HCT116 (cell line): ENCODE measurements at regions of chr19 and their contacts with region 1.

Region 1: DNA sequence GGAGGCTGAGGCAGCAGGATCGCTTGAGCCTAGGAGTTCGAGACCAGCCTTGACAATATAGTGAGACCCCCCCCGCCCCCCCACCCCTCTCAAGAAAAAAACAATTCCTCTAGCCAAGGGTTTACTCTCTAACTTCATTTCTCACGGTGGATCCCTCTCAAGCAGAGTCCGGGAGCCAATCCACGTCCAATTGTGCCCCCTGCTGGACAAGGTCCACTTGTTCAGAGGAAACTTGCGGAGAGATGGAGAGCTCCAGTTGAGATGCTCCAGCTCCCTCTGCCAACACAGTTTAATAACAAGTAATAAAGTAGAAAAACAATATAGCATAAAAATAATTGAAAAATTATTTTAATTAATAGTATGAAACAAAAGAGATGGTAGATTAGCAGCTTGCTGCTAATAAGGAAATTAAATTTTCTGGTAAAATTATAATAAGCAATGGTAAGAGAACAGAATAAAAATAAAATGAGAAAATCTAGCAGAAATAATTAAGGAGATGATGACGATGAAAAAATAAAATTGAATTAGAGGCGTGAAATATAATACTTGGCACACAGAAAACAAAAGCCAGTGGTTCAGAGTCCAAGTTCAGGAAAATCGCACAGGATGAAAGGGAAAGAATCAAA is 14.5 kb upstream of the SIGLEC14 start:
- DNase-seq: peak; percentile 55
- ATAC-seq: peak; percentile 86
- H3K4me3 ChIP-seq: no peak overlapping the region
- H3K27ac ChIP-seq: no peak overlapping the region
- H3K4me1 ChIP-seq: peaks cover 0 to 5% of the 10 kb centered on the region in 2 experiments; a peak in 2 of 4 replicates
- H3K27me3 ChIP-seq: peaks cover 12% of the 10 kb centered on the region; the same call in 1 of the 2 replicates
- CTCF ChIP-seq: peak; percentile 59 to 77 (median 66)
- POLR2A ChIP-seq: no peak
- RAD21 ChIP-seq: peak; percentile 72

Region 2: DNA sequence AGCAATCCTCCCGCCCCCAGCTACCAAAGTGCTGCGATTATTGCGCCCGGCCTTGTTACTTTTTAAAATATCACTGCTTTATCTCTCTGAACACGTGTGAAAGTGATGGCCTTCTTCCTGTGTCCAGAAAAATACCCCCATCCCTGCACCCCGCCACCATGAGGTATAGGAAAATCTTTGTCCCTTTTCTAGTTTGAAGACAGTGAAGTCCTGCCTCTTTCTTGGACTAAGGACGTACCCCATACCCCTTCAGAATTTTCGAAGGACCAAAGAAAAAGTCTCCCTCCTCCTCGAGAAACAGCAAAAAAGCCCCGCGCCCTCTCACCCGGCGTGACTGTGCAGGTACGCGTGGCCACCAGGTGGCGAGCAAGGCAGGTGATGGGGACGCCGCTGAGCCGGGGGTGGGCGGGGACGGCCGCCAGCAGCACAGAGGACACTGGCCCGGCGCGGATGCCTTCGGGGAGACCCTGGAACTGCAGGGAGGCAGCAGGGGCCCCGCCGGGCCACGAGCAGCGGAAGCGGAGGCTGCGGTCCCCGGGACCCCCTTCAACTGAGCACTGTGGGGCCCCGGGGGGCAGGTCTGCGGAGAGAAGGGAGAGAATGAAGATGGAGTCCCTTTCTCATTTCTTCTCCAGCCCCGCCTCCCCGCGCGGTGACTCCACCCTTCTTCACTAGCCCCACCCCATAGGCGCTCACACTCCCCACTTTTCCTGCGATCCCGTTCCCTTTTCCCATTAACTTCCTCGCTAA is 322.4 kb before region 1 on chr19:
- CTCF ChIA-PET with region 1: interaction called, 10 read pairs
- POLR2A ChIA-PET with region 1: no interaction called
- RAD21 ChIA-PET with region 1: no interaction called
- intact Hi-C with region 1: loop called (anchors 1 kb)
- DNase-seq: peak; percentile 56
- ATAC-seq: peak; percentile 76
- H3K4me3 ChIP-seq: peak overlapping the region; percentile 54 to 67
- H3K27ac ChIP-seq: peak overlapping the region; percentile 55
- H3K4me1 ChIP-seq: peaks cover 5 to 45% of the 10 kb centered on the region in 2 experiments; a peak in 3 of 4 replicates
- H3K27me3 ChIP-seq: no peaks in the 10 kb centered on the region
- CTCF ChIP-seq: peak; percentile 86 to 92 (median 89)
- POLR2A ChIP-seq: no peak
- RAD21 ChIP-seq: peak; percentile 86

Region 3: DNA sequence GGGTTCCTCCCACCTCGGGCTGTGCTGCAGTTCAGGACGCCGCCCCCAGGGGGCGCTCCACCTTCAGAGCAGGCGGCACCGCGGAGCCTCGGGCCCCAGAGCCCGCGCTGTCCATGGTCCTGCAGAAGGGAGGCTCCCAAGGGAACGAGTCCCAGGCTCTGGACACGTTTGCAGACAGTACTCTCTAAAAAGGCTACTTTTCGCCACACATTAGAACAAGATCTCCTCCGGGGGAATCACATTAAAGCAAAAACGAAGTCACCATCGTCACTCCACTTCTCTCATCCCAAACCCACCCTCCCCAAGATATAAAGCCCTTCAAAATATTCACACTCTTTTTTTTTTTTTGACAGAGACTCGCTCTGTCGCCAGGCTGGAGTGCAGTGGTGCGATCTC is 239.0 kb before region 1 on chr19:
- CTCF ChIA-PET with region 1: interaction called, 22 read pairs
- POLR2A ChIA-PET with region 1: no interaction called
- RAD21 ChIA-PET with region 1: interaction called in 1 of 2 experiments, 3 read pairs
- intact Hi-C with region 1: loop called (anchors 5 kb)
- DNase-seq: peak; percentile 56
- ATAC-seq: peak; percentile 96
- H3K4me3 ChIP-seq: no peak overlapping the region
- H3K27ac ChIP-seq: no peak overlapping the region
- H3K4me1 ChIP-seq: no peaks in the 10 kb centered on the region; a peak in 1 of 4 replicates
- H3K27me3 ChIP-seq: peaks cover 16% of the 10 kb centered on the region; the same call in 1 of the 2 replicates
- CTCF ChIP-seq: peak; percentile 82 to 100 (median 97)
- POLR2A ChIP-seq: no peak
- RAD21 ChIP-seq: peak; percentile 81

Region 4: GRCh38 chr19:51473009-51473707 is 187.9 kb before region 1 on chr19:
- CTCF ChIA-PET with region 1: interaction called, 35 read pairs
- POLR2A ChIA-PET with region 1: no interaction called
- RAD21 ChIA-PET with region 1: interaction called in 1 of 2 experiments, 4 read pairs
- intact Hi-C with region 1: loop called (anchors 1 kb)
- DNase-seq: peak; percentile 59
- ATAC-seq: peak; percentile 95
- H3K4me3 ChIP-seq: no peak overlapping the region
- H3K27ac ChIP-seq: no peak overlapping the region
- H3K4me1 ChIP-seq: peaks cover 4 to 13% of the 10 kb centered on the region in 2 experiments; a peak in 2 of 4 replicates
- H3K27me3 ChIP-seq: peaks cover 5% of the 10 kb centered on the region; the same call in 1 of the 2 replicates
- CTCF ChIP-seq: peak; percentile 79 to 85 (median 82)
- POLR2A ChIP-seq: no peak
- RAD21 ChIP-seq: peak; percentile 71

Region 5: DNA sequence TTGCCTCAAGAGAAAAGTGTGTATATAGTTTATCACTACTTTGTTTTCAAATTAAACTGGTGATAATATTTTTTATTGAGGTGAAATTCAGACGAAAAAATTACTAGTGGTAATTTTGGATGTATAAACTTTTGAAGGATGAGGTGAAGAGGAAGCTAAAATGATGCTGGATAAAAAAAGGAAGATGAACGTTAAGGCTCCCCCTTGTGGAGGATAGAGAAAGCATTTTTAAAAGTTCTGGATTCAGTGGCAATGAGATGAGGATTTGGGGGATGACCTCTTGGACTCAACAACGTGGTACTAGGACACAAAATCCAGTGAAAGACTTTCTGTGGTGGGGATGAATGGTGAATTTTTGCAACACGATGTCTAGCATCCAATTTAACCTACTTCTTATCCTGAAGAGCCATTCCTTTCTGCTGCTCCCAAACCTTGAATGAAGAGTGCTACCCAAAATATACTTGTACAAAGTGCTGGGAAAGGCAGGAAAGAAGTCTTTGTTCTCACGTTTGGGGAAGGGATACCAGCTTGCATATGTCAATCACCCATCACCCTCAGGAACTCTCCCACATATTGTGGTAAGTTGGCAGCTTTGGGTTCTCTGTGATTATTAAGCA is 23.6 kb before region 1 on chr19:
- CTCF ChIA-PET with region 1: interaction called, 21 read pairs
- POLR2A ChIA-PET with region 1: no interaction called
- RAD21 ChIA-PET with region 1: no interaction called
- intact Hi-C with region 1: no loop called
- DNase-seq: no peak
- ATAC-seq: no peak
- H3K4me3 ChIP-seq: no peak overlapping the region
- H3K27ac ChIP-seq: no peak overlapping the region
- H3K4me1 ChIP-seq: no peaks in the 10 kb centered on the region
- H3K27me3 ChIP-seq: peaks cover 39% of the 10 kb centered on the region
- CTCF ChIP-seq: peak; percentile 32 to 70 (median 58); a peak in 5 of 6 replicates
- POLR2A ChIP-seq: no peak
- RAD21 ChIP-seq: peak; percentile 44

Region 6: DNA sequence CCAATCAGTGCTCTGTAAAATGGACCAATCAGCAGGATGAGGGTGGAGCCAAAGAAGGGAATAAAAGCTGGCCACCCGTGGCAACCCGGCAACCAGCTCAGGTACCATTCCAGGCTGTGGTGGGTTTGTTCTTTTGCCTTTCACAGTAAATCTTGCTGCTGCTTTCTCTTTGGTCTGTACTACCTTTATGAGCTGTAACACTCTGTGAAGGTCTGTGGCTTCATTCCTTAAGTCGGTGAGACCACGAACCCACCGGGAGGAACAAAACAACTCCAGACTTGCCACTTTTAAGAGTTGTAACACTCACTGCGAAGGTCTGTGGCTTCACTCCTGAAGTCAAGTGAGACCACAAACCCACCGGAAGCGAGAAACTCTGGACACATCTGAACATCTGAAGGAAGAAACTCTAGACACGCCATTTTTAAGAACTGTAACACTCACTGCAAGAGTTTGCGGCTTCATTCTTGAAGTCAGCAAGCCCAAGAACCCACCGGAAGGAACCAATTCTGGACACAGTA is 15.5 kb after region 1 on chr19:
- CTCF ChIA-PET with region 1: interaction called, 10 read pairs
- POLR2A ChIA-PET with region 1: no interaction called
- RAD21 ChIA-PET with region 1: no interaction called
- intact Hi-C with region 1: no loop called
- DNase-seq: no peak
- ATAC-seq: peak; percentile 42; the same call in 1 of the 2 replicates
- H3K4me3 ChIP-seq: no peak overlapping the region
- H3K27ac ChIP-seq: no peak overlapping the region
- H3K4me1 ChIP-seq: no peaks in the 10 kb centered on the region
- H3K27me3 ChIP-seq: no peaks in the 10 kb centered on the region
- CTCF ChIP-seq: no peak
- POLR2A ChIP-seq: no peak
- RAD21 ChIP-seq: no peak

Region 7: GRCh38 chr19:51777570-51778462 is 116.7 kb after region 1 on chr19:
- CTCF ChIA-PET with region 1: interaction called, 22 read pairs
- POLR2A ChIA-PET with region 1: no interaction called
- RAD21 ChIA-PET with region 1: interaction called in 1 of 2 experiments, 3 read pairs
- intact Hi-C with region 1: loop called (anchors 5 kb)
- DNase-seq: peak; percentile 83
- ATAC-seq: peak; percentile 95
- H3K4me3 ChIP-seq: no peak overlapping the region
- H3K27ac ChIP-seq: no peak overlapping the region
- H3K4me1 ChIP-seq: peaks cover 0 to 4% of the 10 kb centered on the region in 2 experiments; a peak in 1 of 4 replicates
- H3K27me3 ChIP-seq: no peaks in the 10 kb centered on the region
- CTCF ChIP-seq: peak; percentile 57 to 71 (median 71); a peak in 5 of 6 replicates
- POLR2A ChIP-seq: no peak
- RAD21 ChIP-seq: peak; percentile 83